ENCODE measurements at regions of chr16 and their contacts with region 1.

Region 1: DNA sequence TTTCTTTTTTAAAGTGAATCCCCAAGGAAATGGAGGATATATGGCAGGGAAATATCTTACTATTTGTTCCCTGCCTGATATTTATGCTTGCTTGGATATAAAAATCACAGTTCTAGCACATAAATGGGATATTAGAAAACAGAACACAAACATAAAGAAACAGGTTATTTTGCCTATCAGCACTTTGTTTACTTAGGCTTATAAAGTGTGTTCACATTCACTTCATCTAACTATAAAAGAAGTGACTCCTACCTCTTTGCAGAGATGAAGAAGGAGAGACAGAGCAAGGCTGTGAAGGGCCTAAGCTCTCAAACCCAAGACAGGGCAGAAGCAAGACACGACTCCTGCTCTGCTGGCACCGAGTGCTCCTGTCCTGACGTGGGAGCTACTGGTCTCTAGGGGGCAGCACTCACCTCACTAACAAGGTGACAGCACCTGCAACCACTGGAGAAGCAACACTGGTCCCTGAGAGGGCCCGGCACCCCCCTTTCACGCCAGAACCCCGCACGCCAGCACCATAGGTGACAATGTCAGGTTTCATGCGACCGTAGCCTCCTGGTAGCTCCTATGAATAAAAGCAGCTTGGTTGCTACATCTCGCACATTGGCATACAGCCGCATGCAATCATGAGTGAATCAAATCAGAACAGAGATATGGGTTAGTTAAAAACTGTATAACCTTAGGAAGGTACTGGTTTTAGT is 32.0 kb downstream of the MBTPS1 start:
- DNase-seq: peak; percentile 73
- ATAC-seq: peak; percentile 94
- H3K4me3 ChIP-seq: no peak overlapping the region
- H3K27ac ChIP-seq: no peak overlapping the region
- H3K4me1 ChIP-seq: peaks cover 11% of the 10 kb centered on the region
- H3K27me3 ChIP-seq: no peaks in the 10 kb centered on the region
- CTCF ChIP-seq: peak; percentile 67

Region 2: GRCh38 chr16:84186685-84187437 is 102.1 kb after region 1 on chr16 and contains the start of gene TAF1C:
- intact Hi-C with region 1: loop called (anchors 10 kb)
- DNase-seq: peak; percentile 95
- ATAC-seq: peak; percentile 98
- H3K4me3 ChIP-seq: peak within 1 kb of the TSS; percentile 96
- H3K27ac ChIP-seq: peak within 1 kb of the TSS; percentile 80
- H3K4me1 ChIP-seq: peaks cover 22% of the 10 kb centered on the region
- H3K27me3 ChIP-seq: no peaks in the 10 kb centered on the region
- CTCF ChIP-seq: peak; percentile 91
- total RNA-seq, gene TAF1C: 80.2 TPM